ENCODE measurements at regions of chr4 and their contacts with region 1.

Region 1: GRCh38 chr4:143411527-143412480 is 75.1 kb downstream of the GAB1 start:
- DNase-seq: peak; percentile 39
- H3K4me3 ChIP-seq: peak overlapping the region; percentile 15
- H3K27ac ChIP-seq: peak overlapping the region; percentile 97
- H3K4me1 ChIP-seq: peaks cover 85% of the 10 kb centered on the region
- CTCF ChIP-seq: no peak

Region 2: GRCh38 chr4:143281507-143282190 is 130.2 kb before region 1 on chr4:
- CTCF ChIA-PET with region 1: no interaction called
- POLR2A ChIA-PET with region 1: no interaction called
- intact Hi-C with region 1: no loop called
- DNase-seq: no peak
- H3K4me3 ChIP-seq: no peak overlapping the region
- H3K27ac ChIP-seq: no peak overlapping the region
- H3K4me1 ChIP-seq: no peaks in the 10 kb centered on the region
- CTCF ChIP-seq: no peak

Region 3: GRCh38 chr4:143381171-143382118 is 30.4 kb before region 1 on chr4:
- CTCF ChIA-PET with region 1: interaction called, 9 read pairs
- POLR2A ChIA-PET with region 1: interaction called, 75 read pairs
- intact Hi-C with region 1: no loop called
- DNase-seq: peak; percentile 80
- H3K4me3 ChIP-seq: peak overlapping the region; percentile 18
- H3K27ac ChIP-seq: peak overlapping the region; percentile 81
- H3K4me1 ChIP-seq: peaks cover 100% of the 10 kb centered on the region
- CTCF ChIP-seq: no peak

Region 4: GRCh38 chr4:143389579-143390195 is 22.1 kb before region 1 on chr4:
- CTCF ChIA-PET with region 1: interaction called, 9 read pairs
- POLR2A ChIA-PET with region 1: interaction called, 40 read pairs
- intact Hi-C with region 1: no loop called
- DNase-seq: no peak
- H3K4me3 ChIP-seq: peak overlapping the region; percentile 5
- H3K27ac ChIP-seq: peak overlapping the region; percentile 96
- H3K4me1 ChIP-seq: peaks cover 80% of the 10 kb centered on the region
- CTCF ChIP-seq: no peak

Region 5: DNA sequence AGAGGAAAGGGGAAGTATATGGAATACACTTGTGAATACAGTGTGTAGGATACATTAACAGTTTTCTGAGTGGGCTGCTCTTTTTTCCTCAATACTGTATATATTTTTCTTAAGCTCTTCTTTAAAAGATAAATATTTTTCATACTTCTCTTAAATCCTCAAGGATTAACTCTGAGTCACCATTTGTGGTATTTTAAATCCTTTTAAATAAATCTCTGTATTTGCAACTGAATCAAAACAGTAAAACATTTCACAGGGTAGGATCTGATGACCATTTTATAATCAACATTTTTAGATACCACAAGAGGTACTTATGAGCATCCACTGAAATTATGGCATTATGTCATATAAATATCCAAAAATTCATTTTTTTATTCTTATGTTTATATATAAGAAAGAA is 12.5 kb after region 1 on chr4:
- CTCF ChIA-PET with region 1: interaction called, 5 read pairs
- POLR2A ChIA-PET with region 1: interaction called, 83 read pairs
- intact Hi-C with region 1: no loop called
- DNase-seq: no peak
- H3K4me3 ChIP-seq: no peak overlapping the region
- H3K27ac ChIP-seq: peak overlapping the region; percentile 55
- H3K4me1 ChIP-seq: peaks cover 71% of the 10 kb centered on the region
- CTCF ChIP-seq: no peak

Measured in OCI-LY7 (cell line).